Panc1 (cell line): ENCODE measurements at regions of chr19 and their contacts with region 1.

Region 1: GRCh38 chr19:4638828-4639530 is at the start of gene TNFAIP8L1:
- DNase-seq: no peak
- ATAC-seq: peak; percentile 87
- H3K4me3 ChIP-seq: peak within 1 kb of the TSS; percentile 61 to 74
- H3K27ac ChIP-seq: peak within 1 kb of the TSS; percentile 70
- H3K4me1 ChIP-seq: peaks cover 3% of the 10 kb centered on the region
- H3K27me3 ChIP-seq: no peaks in the 10 kb centered on the region
- CTCF ChIP-seq: no peak
- total RNA-seq, gene TNFAIP8L1: 4.8 TPM

Region 2: GRCh38 chr19:3557461-3558248 is 1081.3 kb before region 1 on chr19 and contains the start of gene MFSD12:
- CTCF ChIA-PET with region 1: no interaction called
- POLR2A ChIA-PET with region 1: interaction called, 14 read pairs
- in situ Hi-C with region 1: no loop called
- intact Hi-C with region 1: no loop called
- DNase-seq: no peak
- ATAC-seq: peak; percentile 98
- H3K4me3 ChIP-seq: peak within 1 kb of the TSS; percentile 62 to 68
- H3K27ac ChIP-seq: peak within 1 kb of the TSS; percentile 72
- H3K4me1 ChIP-seq: peaks cover 11% of the 10 kb centered on the region
- H3K27me3 ChIP-seq: no peaks in the 10 kb centered on the region
- CTCF ChIP-seq: no peak
- total RNA-seq, gene MFSD12: 98.8 TPM

Region 3: GRCh38 chr19:4567584-4568071 is 71.4 kb before region 1 on chr19:
- CTCF ChIA-PET with region 1: interaction called, 12 read pairs
- POLR2A ChIA-PET with region 1: no interaction called
- in situ Hi-C with region 1: no loop called
- intact Hi-C with region 1: no loop called
- DNase-seq: no peak
- ATAC-seq: peak; percentile 88
- H3K4me3 ChIP-seq: no peak overlapping the region
- H3K27ac ChIP-seq: no peak overlapping the region
- H3K4me1 ChIP-seq: no peaks in the 10 kb centered on the region
- H3K27me3 ChIP-seq: no peaks in the 10 kb centered on the region
- CTCF ChIP-seq: peak; percentile 94

Region 4: GRCh38 chr19:4576016-4576933 is 62.7 kb before region 1 on chr19:
- CTCF ChIA-PET with region 1: no interaction called
- POLR2A ChIA-PET with region 1: no interaction called
- in situ Hi-C with region 1: no loop called
- intact Hi-C with region 1: loop called (anchors 5 kb)
- DNase-seq: no peak
- ATAC-seq: peak; percentile 58
- H3K4me3 ChIP-seq: no peak overlapping the region
- H3K27ac ChIP-seq: no peak overlapping the region; the same call in 1 of the 2 replicates
- H3K4me1 ChIP-seq: peaks cover 14% of the 10 kb centered on the region
- H3K27me3 ChIP-seq: no peaks in the 10 kb centered on the region
- CTCF ChIP-seq: peak; percentile 86